ENCODE measurements at regions of chr2 and their contacts with region 1.

Region 1: DNA sequence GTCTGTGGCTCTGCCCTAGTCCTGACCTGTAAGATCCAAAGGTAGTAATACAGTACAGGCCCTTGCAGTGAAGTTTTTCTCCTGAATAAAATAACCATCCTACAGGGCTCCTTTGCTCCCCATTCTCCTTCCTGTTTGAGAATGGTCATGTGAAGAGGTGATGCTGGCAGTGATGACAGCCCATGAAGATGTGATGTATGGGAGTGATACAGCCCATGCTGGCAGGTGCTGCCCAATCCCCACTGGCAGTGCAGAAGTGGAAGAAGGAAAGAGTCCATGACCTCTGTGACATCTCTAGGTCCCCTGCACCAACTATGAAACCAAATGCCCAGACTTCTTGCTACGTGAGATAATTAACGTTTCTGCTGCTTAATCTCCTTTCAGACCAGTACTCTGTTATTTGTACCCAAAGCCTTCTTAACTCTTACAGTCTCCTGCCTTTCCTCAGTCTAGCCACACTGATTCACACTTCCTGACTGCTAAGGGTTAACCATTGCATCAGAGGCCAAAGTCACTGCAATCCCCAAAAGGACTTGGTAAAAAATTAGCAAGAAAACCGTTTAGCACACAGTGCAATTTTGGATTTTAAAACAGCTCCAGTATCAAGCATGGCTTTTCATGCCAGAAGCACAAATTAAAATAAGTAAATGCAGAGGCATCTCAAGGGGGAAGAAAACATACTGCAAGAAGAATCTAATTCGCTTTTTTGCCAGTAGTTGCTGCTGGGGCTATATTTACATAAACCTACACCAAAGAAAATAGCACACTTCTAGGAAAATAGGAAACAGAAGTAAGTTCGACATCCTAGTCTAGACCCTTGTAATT is 98.0 kb downstream of the STK39 start:
- DNase-seq: no peak
- H3K4me3 ChIP-seq: no peak overlapping the region
- H3K27ac ChIP-seq: peak overlapping the region; percentile 56
- H3K4me1 ChIP-seq: peaks cover 70% of the 10 kb centered on the region
- H3K27me3 ChIP-seq: no peaks in the 10 kb centered on the region
- CTCF ChIP-seq: no peak

Region 2: DNA sequence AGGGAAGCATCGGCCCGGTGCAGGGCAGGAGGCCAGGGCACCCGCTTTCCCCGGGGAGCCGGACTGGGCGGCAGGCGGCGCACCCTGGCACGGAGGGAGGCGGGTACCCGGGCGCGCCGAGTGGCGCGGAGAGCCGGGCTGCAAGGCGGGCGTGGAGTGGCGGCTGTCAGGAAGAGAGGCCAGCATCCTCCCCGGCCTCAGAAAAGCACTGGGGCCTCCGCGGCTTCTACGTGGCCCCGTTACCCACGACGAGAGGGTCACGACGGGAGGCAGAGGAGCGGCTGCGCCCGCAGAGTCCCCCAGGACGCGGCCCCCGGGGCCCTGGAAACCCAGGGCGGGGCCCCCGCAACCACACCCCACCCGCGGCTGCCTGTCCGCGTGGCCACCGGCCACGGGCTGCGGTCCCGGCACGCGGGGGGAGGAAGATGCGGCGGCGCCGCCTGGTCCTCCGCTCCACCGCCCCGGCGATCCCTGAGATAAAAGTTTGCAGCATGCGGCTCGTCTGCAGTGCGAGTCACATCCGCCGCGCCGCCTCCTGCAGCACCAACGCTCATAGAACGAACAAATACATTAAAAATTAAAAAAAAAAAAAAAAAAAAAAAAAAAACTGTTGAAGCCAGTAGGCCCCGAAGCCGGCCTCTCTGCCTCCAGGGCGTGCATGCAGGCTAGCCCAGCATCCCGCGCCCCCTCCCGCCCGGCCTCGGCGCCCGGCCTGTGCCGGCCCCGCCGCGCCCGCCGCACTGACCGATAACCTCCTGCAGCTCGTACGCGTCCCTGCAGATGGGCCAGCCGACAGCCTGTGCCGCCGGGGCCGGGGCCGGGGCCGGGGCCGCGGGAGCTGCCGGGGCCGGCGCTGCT is 97.3 kb after region 1 on chr2:
- intact Hi-C with region 1: loop called (anchors 10 kb)
- DNase-seq: peak; percentile 76
- H3K4me3 ChIP-seq: peak overlapping the region; percentile 89
- H3K27ac ChIP-seq: peak overlapping the region; percentile 90
- H3K4me1 ChIP-seq: peaks cover 46% of the 10 kb centered on the region
- H3K27me3 ChIP-seq: no peaks in the 10 kb centered on the region
- CTCF ChIP-seq: peak; percentile 51